PC-9 (cell line): ENCODE measurements at regions of chr11 and their contacts with region 1.

Region 1: GRCh38 chr11:108008656-108009496 is at the start of gene CUL5:
- DNase-seq: peak; percentile 83 to 90
- H3K4me3 ChIP-seq: peak within 1 kb of the TSS; percentile 97
- H3K27ac ChIP-seq: peak within 1 kb of the TSS; percentile 93
- H3K4me1 ChIP-seq: peaks cover 25% of the 10 kb centered on the region
- H3K27me3 ChIP-seq: no peaks in the 10 kb centered on the region
- CTCF ChIP-seq: peak; percentile 89
- total RNA-seq, gene CUL5: 34.3 and 39.4 TPM in 2 replicates

Region 2: DNA sequence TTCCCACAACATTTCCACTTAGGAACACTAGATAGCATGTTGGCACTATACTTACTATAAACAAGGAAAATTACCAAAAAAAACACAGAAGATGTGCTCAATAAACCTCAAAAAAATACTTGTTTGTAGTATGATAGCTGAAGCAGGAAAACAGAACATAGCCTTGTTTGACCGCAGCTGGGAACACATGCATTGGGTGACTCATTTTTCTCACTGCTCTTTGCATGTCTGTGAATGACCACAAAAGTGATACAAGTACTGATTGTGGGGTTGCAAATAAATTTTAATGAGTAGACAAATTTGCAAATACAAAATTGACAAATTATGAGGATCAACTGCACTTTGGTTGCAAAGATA is 967.8 kb before region 1 on chr11:
- CTCF ChIA-PET with region 1: no interaction called
- POLR2A ChIA-PET with region 1: no interaction called
- intact Hi-C with region 1: no loop called
- DNase-seq: no peak
- H3K4me3 ChIP-seq: no peak overlapping the region
- H3K27ac ChIP-seq: no peak overlapping the region
- H3K4me1 ChIP-seq: 0 out of 2 replicates have a peak, but pooled peaks cover 4% of the 10 kb centered on the region
- H3K27me3 ChIP-seq: no peaks in the 10 kb centered on the region
- CTCF ChIP-seq: no peak

Region 3: GRCh38 chr11:107573438-107573837 is 435.4 kb before region 1 on chr11:
- CTCF ChIA-PET with region 1: no interaction called
- POLR2A ChIA-PET with region 1: no interaction called
- intact Hi-C with region 1: loop called (anchors 5 kb)
- DNase-seq: no peak
- H3K4me3 ChIP-seq: no peak overlapping the region
- H3K27ac ChIP-seq: no peak overlapping the region
- H3K4me1 ChIP-seq: peaks cover 4% of the 10 kb centered on the region; the same call in 1 of the 2 replicates
- H3K27me3 ChIP-seq: no peaks in the 10 kb centered on the region
- CTCF ChIP-seq: no peak

Region 4: DNA sequence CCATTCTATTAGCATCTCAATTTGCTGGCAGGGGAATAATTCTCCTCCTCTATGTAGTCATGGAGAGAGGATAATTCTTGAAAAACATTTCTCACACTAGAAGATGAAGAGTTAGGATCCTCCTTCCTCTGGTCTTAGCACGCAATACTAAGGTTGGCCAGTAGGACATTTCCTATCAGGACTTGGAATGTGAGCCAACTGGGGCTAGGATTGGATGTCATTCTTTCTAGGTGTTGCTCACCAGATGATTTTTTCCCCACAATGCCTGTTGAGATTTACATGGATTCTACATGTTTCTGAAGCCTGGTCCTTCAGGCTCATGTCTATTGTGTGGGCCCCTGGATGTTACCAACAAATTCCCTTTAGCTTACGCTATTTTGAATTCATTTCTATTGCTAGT is 325.1 kb before region 1 on chr11:
- CTCF ChIA-PET with region 1: no interaction called
- POLR2A ChIA-PET with region 1: no interaction called
- intact Hi-C with region 1: no loop called
- DNase-seq: no peak
- H3K4me3 ChIP-seq: no peak overlapping the region
- H3K27ac ChIP-seq: no peak overlapping the region
- H3K4me1 ChIP-seq: no peaks in the 10 kb centered on the region
- H3K27me3 ChIP-seq: no peaks in the 10 kb centered on the region
- CTCF ChIP-seq: peak; percentile 62

Region 5: DNA sequence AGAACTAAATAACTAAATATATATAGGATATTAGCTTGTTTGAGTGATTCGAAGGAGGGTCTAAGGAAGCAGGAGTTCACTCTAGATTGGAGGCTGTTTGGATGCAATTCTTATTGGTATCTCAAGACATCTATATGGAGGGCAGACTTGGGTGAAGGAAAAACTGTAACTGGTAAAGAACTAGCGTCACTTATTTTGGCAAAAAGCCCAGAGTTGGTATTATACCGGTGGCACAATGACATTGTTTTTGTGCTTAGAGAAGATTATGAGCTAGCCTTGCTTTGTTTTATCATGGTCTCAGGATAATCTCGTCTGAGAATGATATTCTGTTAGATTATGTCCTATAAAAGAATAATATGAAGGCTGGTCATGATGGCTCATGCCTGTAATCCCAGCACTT is 144.3 kb before region 1 on chr11:
- CTCF ChIA-PET with region 1: interaction called, 13 read pairs
- POLR2A ChIA-PET with region 1: no interaction called
- intact Hi-C with region 1: no loop called
- DNase-seq: no peak
- H3K4me3 ChIP-seq: no peak overlapping the region
- H3K27ac ChIP-seq: no peak overlapping the region
- H3K4me1 ChIP-seq: 0 out of 2 replicates have a peak, but pooled peaks cover 7% of the 10 kb centered on the region
- H3K27me3 ChIP-seq: no peaks in the 10 kb centered on the region
- CTCF ChIP-seq: no peak

Region 6: DNA sequence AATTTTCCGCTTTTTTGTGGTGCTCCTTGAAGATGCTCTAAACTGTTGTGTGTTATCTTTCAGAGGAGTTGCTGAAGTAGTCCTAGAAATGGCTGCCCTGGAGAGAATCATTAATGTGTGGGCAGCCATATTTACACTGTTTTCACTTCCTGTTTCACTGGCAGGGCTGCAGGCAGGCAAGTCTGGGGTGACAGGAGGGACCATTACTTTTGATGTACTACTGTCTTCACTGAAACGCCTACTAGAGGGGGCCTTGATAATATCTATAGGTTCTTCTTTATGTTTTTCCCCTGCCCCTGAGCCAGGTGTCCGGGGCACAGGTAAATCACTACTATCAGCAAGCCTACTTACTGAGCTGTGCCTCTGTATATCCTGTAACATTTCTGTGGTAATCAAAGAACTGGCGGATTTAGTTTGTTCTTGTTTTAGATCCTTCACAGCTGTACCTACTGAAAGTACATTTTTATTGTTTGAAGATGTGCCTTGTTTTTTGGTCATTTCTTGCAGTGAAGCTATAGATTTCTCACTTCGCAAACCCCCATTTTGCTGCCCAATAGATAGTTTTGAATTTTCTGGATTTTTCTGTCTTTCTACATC is 152.2 kb after region 1 on chr11:
- CTCF ChIA-PET with region 1: interaction called, 10 read pairs
- POLR2A ChIA-PET with region 1: no interaction called
- intact Hi-C with region 1: no loop called
- DNase-seq: no peak
- H3K4me3 ChIP-seq: no peak overlapping the region
- H3K27ac ChIP-seq: no peak overlapping the region
- H3K4me1 ChIP-seq: no peaks in the 10 kb centered on the region
- H3K27me3 ChIP-seq: no peaks in the 10 kb centered on the region
- CTCF ChIP-seq: no peak

Region 7: DNA sequence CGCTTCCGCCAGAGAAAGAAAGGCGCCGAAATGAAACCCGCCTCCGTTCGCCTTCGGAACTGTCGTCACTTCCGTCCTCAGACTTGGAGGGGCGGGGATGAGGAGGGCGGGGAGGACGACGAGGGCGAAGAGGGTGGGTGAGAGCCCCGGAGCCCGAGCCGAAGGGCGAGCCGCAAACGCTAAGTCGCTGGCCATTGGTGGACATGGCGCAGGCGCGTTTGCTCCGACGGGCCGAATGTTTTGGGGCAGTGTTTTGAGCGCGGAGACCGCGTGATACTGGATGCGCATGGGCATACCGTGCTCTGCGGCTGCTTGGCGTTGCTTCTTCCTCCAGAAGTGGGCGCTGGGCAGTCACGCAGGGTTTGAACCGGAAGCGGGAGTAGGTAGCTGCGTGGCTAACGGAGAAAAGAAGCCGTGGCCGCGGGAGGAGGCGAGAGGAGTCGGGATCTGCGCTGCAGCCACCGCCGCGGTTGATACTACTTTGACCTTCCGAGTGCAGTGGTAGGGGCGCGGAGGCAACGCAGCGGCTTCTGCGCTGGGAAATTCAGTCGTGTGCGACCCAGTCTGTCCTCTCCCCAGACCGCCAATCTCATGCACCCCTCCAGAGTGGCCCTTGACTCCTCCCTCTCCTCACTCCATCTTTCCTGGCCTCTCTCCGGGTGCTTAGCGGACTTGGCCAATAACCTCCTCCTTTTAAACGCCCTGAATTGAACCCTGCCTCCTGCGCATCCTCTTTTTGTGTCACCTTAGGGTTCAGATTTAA is 214.0 kb after region 1 on chr11 and contains the start of gene ATM:
- CTCF ChIA-PET with region 1: no interaction called
- POLR2A ChIA-PET with region 1: interaction called, 4 read pairs
- intact Hi-C with region 1: loop called (anchors 2 kb)
- DNase-seq: peak; percentile 98
- H3K4me3 ChIP-seq: peak within 1 kb of the TSS; percentile 97
- H3K27ac ChIP-seq: peak within 1 kb of the TSS; percentile 86
- H3K4me1 ChIP-seq: peaks cover 36% of the 10 kb centered on the region
- H3K27me3 ChIP-seq: no peaks in the 10 kb centered on the region
- CTCF ChIP-seq: peak; percentile 71; the same call in 1 of the 2 replicates
- total RNA-seq, gene ATM: 36.3 and 40.8 TPM in 2 replicates

Region 8: DNA sequence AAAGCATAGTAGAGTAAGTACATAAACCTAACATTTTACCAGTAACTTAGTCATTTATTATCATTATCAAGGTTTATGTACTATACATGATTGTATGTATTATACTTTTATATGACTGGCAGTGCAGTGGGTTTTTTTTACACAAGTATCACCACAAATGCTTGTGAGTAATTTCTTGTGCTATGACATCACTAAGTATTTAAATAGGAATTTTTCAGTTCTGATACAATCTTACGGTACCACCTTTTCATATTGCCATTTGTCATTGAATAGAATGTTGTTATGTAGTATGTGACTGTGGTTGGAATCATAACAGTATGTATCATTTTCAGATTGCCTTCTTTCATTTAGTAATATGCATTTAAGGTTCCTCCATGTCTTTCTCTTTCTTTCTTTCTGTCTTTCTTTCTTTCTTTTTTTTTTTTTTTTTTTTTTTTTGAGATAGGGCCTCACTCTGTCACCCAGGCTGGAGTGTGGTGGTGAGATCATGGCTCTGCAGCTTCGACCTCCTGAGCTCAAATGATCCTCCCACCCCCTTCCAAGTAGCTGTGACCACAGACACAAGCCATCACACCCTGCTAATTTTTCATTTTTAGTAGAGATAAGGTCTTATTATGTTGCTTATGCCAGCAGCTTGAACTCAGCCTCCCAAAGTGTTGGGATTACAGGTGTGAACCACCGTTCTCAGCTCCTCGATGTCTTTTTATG is 232.6 kb after region 1 on chr11:
- CTCF ChIA-PET with region 1: no interaction called
- POLR2A ChIA-PET with region 1: interaction called, 10 read pairs
- intact Hi-C with region 1: no loop called
- DNase-seq: no peak
- H3K4me3 ChIP-seq: no peak overlapping the region
- H3K27ac ChIP-seq: no peak overlapping the region
- H3K4me1 ChIP-seq: no peaks in the 10 kb centered on the region
- H3K27me3 ChIP-seq: no peaks in the 10 kb centered on the region
- CTCF ChIP-seq: no peak

Region 9: DNA sequence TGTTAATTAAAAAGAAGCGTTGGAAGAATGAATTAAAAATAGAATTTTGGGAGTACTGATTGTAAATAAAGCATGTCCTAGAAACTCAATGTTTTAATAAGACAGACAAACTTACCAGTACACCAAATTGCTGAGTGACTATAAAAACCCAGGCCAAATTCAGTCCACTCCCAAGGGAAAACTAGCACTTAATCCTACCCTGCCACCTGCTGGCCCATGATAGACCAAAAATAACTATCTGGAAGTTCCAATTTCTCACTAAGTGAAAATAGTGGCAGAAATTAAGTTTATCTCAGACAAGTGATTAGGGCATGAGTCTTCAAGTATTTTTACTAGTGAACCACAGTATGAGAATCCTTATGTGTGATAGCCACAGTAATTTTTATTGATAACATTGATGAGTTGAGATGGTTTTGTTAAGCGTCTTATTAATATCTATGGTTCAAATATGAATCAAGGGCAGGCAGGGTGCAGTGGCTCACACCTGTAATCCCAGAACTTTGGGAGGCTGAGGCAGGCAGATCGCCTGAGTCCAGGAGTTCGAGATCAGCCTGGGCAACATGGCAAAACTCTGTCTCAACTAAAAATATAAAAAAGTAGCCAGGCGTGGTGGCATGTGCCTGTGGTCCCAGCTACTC is 646.2 kb after region 1 on chr11:
- CTCF ChIA-PET with region 1: no interaction called
- POLR2A ChIA-PET with region 1: no interaction called
- intact Hi-C with region 1: loop called (anchors 10 kb)
- DNase-seq: peak; percentile 47 to 60
- H3K4me3 ChIP-seq: no peak overlapping the region
- H3K27ac ChIP-seq: no peak overlapping the region
- H3K4me1 ChIP-seq: no peaks in the 10 kb centered on the region
- H3K27me3 ChIP-seq: no peaks in the 10 kb centered on the region
- CTCF ChIP-seq: peak; percentile 93